ENCODE measurements at regions of chr10 and their contacts with region 1.

Region 1: GRCh38 chr10:97234400-97234799 is 48.6 kb upstream of the SLIT1 start:
- DNase-seq: peak; percentile 51 to 73 (median 69)
- H3K4me3 ChIP-seq: no peak overlapping the region
- H3K27ac ChIP-seq: no peak overlapping the region
- H3K4me1 ChIP-seq: no peaks in the 10 kb centered on the region
- H3K27me3 ChIP-seq: no peaks in the 10 kb centered on the region

Region 2: GRCh38 chr10:97217299-97217698 is 17.1 kb before region 1 on chr10:
- CTCF ChIA-PET with region 1: interaction called, 25 read pairs
- POLR2A ChIA-PET with region 1: no interaction called
- DNase-seq: peak in 1 of 3 donors; percentile 64
- H3K4me3 ChIP-seq: no peak overlapping the region
- H3K27ac ChIP-seq: no peak overlapping the region
- H3K4me1 ChIP-seq: peaks cover 0 to 23% (median 14%) of the 10 kb centered on the region in 4 experiments
- H3K27me3 ChIP-seq: no peaks in the 10 kb centered on the region

Region 3: DNA sequence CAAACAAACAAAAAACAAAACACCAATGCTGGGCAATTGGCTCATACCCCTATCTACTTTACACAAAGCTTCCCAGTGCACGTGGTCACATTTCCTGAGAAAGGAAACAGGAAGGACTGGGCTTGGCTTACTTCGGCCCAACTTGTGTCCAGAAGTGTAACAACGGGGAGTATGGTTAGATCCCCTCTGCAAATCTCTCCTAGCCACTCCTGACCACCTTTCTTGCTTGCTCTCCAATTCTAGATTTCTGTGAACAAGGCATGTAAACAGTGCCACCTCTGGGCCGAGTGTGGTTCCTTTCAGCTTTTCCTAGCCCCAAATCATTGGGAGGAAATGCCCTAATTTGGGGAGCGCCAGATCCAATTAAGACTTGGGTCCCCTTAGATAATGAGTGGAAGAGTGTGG is 121.2 kb after region 1 on chr10:
- CTCF ChIA-PET with region 1: no interaction called
- POLR2A ChIA-PET with region 1: no interaction called
- DNase-seq: peak; percentile 26 to 58 (median 44)
- H3K4me3 ChIP-seq: no peak overlapping the region
- H3K27ac ChIP-seq: no peak overlapping the region
- H3K4me1 ChIP-seq: peaks cover 4 to 20% (median 18%) of the 10 kb centered on the region in 4 experiments
- H3K27me3 ChIP-seq: no peaks in the 10 kb centered on the region